Heart left ventricle (tissue), 16 donors: ENCODE measurements at regions of chr10 and their contacts with region 1.

Region 1: DNA sequence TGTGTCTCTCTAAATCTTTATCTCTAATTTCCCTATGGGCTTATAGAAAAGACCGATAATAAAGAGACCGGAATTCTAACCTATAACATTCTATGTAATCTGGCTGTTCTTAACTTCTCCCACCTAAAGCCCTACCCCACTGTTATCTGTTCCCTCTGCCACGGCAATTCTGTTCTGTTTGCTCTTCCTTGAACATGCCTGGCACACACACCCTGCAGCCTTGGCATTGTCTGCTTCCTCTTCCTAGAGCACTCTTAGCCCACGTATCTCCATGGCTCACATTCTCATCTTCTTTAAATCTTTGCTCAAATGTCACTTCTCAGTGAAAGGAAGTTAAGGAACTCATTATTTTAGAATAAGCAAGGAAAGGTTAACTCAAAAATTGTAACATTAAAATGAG is 309.2 kb downstream of the GPR158 start:
- DNase-seq: no peak
- ATAC-seq: no peak
- H3K4me3 ChIP-seq: no peak overlapping the region
- H3K27ac ChIP-seq: no peak overlapping the region
- H3K4me1 ChIP-seq: no peaks in the 10 kb centered on the region
- H3K27me3 ChIP-seq: no peaks in the 10 kb centered on the region
- CTCF ChIP-seq: no peak
- POLR2A ChIP-seq: no peak

Region 2: DNA sequence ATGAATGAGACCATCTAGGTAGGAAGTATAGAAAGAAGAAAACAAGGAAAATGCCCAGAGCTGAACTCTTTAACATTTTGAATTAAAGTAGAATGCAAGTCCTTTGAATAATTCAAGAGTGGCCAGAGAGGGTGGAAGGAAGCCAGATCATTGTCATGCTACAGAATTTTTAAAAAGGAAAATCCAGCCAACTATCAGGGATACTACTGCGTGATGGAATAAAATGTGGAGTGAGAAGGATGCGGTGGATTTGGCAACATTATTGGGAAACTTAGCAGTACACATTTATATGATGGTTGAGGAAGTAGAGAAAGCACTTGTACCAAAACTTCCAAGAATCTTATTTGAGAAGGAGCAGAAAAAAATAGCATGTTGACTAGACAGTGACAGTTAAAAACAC is 47.6 kb before region 1 on chr10:
- intact Hi-C with region 1: no loop called
- DNase-seq: no peak
- ATAC-seq: no peak
- H3K4me3 ChIP-seq: no peak overlapping the region
- H3K27ac ChIP-seq: no peak overlapping the region
- H3K4me1 ChIP-seq: peaks cover 0 to 1% (median 0%) of the 10 kb centered on the region in 12 donors
- H3K27me3 ChIP-seq: no peaks in the 10 kb centered on the region
- CTCF ChIP-seq: no peak
- POLR2A ChIP-seq: no peak

Region 3: DNA sequence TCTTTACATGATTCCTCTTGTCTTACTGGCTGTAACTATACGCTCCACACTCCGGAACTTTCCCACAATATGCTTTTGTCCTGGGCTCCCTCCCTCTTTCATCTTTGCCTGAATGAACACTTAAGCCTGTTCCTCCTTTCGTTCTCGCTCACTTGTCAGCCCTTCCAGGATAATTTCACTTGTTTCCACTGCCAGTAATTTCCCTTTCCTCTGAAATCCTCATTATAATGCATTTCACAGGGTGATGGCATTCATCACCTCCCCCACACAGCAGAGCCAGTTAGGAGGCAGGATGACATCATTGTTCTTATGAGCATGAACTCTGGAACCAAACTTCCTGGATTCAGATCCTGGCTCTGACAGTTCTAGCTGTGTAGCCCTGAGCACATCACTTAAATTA is 63.4 kb after region 1 on chr10:
- intact Hi-C with region 1: loop called in 1 of 10 experiments (anchors 10 kb)
- DNase-seq: no peak
- ATAC-seq: no peak
- H3K4me3 ChIP-seq: no peak overlapping the region
- H3K27ac ChIP-seq: no peak overlapping the region
- H3K4me1 ChIP-seq: no peaks in the 10 kb centered on the region
- H3K27me3 ChIP-seq: peaks cover 0 to 3% (median 0%) of the 10 kb centered on the region in 9 donors
- CTCF ChIP-seq: no peak
- POLR2A ChIP-seq: no peak